Activated T-helper 2 cell treated with anti-CD3 and anti-CD28 coated beads, Interferon-gamma antibody, Interleukin-2, Interleukin-4, amounts not matched to agents 10 μg/mL and 5 μg/mL and 100 μg/mL, durations not matched to agents 14 hours and 24 hours and 36 hours (primary cell): ENCODE measurements at regions of chr7 and their contacts with region 1.

Region 1: DNA sequence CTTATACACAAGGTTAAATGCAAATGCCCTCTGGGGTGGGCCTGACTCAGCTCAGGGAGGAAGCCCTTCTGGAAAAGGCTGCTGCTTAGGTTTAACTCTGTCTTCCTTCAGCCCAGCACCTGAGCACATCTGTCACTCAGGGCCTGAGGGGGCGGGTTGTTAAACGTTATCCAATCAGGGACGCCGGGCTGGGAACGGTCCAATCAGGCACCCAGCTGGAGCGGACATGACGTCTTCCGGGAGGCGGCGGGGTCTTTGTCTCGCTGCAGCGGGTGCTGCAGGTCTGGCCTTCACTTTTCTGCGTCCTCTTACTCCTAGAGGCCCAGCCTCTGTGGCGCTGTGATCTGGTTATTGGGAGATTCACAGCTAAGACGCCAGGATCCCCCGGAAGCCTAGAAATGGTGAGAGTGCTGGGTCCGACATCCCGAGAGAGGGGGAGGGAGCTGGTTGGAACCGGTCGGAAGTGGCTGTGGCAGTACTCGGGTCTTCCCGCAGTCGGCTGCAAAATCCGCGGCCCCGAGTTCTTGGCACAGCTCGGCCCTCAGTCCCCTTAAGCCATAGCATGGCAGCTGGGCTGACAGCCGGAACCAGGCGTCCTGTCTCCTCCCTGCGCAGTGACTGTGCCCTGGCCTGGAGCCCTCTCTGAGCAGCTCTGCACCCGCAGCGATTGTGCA is at the start of gene ZNF138:
- DNase-seq: peak; percentile 89
- H3K4me3 Mint-ChIP-seq: peak within 1 kb of the TSS; percentile 99
- H3K27ac Mint-ChIP-seq: peak within 1 kb of the TSS; percentile 97
- H3K4me1 Mint-ChIP-seq: peaks cover 11% of the 10 kb centered on the region
- H3K27me3 Mint-ChIP-seq: no peaks in the 10 kb centered on the region
- total RNA-seq, gene ZNF138: 7.9 and 8.1 TPM in 2 replicates

Region 2: GRCh38 chr7:64307254-64308015 is 486.9 kb before region 1 on chr7:
- intact Hi-C with region 1: loop called (anchors 2 kb)
- DNase-seq: peak; percentile 92
- H3K4me3 Mint-ChIP-seq: peak overlapping the region; percentile 97
- H3K27ac Mint-ChIP-seq: peak overlapping the region; percentile 91
- H3K4me1 Mint-ChIP-seq: peaks cover 12% of the 10 kb centered on the region
- H3K27me3 Mint-ChIP-seq: no peaks in the 10 kb centered on the region

Region 3: DNA sequence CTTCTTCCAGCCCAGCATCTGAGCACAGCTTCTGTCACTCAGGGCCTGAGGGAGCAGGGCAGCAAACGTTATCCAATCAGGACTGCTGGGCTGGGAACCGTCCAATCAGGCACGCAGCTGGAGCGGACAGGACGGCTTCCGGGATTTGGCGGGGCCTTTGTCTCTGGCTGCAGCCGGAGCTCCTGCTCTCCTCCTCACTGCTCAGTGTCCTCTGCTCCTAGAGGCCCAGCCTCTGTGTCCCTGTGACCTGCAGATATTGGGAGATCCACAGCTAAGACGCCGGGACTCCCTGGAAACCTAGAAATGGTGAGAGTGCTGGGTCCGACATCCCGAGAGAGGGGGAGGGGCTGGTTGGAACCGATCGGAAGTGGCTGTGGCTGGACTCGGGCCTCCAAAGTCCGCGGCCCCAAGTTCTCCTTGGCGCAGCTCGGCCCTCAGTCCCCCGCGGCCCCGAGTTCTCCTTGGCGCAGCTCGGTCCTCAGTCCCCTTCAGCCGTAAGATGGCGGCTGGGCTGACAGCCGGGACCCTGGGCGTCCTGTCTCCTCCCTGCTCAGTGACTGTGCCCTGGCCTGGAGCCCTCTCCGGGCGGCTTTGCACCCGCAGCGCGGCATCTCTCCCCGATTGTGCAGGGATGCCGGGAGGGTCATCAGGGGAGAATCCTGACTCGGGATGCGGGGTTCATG is 128.2 kb before region 1 on chr7 and contains the start of gene ZNF107:
- intact Hi-C with region 1: loop called (anchors 2 kb)
- DNase-seq: peak; percentile 83
- H3K4me3 Mint-ChIP-seq: peak within 1 kb of the TSS; percentile 97
- H3K27ac Mint-ChIP-seq: peak within 1 kb of the TSS; percentile 92
- H3K4me1 Mint-ChIP-seq: peaks cover 11% of the 10 kb centered on the region
- H3K27me3 Mint-ChIP-seq: no peaks in the 10 kb centered on the region
- total RNA-seq, gene ZNF107: 12.8 and 13.1 TPM in 2 replicates

Region 4: GRCh38 chr7:64951250-64951848 is 157.0 kb after region 1 on chr7:
- intact Hi-C with region 1: no loop called
- DNase-seq: no peak
- H3K4me3 Mint-ChIP-seq: no peak overlapping the region
- H3K27ac Mint-ChIP-seq: no peak overlapping the region
- H3K4me1 Mint-ChIP-seq: no peaks in the 10 kb centered on the region
- H3K27me3 Mint-ChIP-seq: peaks cover 21% of the 10 kb centered on the region

Region 5: GRCh38 chr7:65037740-65038678 is 243.7 kb after region 1 on chr7:
- intact Hi-C with region 1: loop called (anchors 5 kb)
- DNase-seq: peak; percentile 85
- H3K4me3 Mint-ChIP-seq: peak overlapping the region; percentile 74
- H3K27ac Mint-ChIP-seq: peak overlapping the region; percentile 70
- H3K4me1 Mint-ChIP-seq: peaks cover 16% of the 10 kb centered on the region
- H3K27me3 Mint-ChIP-seq: no peaks in the 10 kb centered on the region